GM12878 (cell line): ENCODE measurements at regions of chr1 and their contacts with region 1.

Region 1: GRCh38 chr1:116538544-116538943 is 32.3 kb downstream of the CD58 start:
- DNase-seq: no peak
- ATAC-seq: peak; percentile 89
- H3K4me3 ChIP-seq: no peak overlapping the region
- H3K27ac ChIP-seq: peak overlapping the region; percentile 66
- H3K4me1 ChIP-seq: peaks cover 51% of the 10 kb centered on the region
- H3K27me3 ChIP-seq: no peaks in the 10 kb centered on the region
- CTCF ChIP-seq: no peak
- EP300 ChIP-seq: peak in 1 of 2 experiments; percentile 34; a peak in 1 of 4 replicates
- POLR2A ChIP-seq: no peak
- RAD21 ChIP-seq: no peak

Region 2: GRCh38 chr1:116382321-116382720 is 156.2 kb before region 1 on chr1:
- CTCF ChIA-PET with region 1: no interaction called
- POLR2A ChIA-PET with region 1: no interaction called
- RAD21 ChIA-PET with region 1: no interaction called
- SMC1A ChIA-PET with region 1: no interaction called
- in situ Hi-C with region 1: no loop called
- intact Hi-C with region 1: no loop called
- DNase-seq: no peak
- ATAC-seq: no peak
- H3K4me3 ChIP-seq: no peak overlapping the region
- H3K27ac ChIP-seq: peak overlapping the region; percentile 1; the same call in 1 of the 2 replicates
- H3K4me1 ChIP-seq: peaks cover 36% of the 10 kb centered on the region
- H3K27me3 ChIP-seq: no peaks in the 10 kb centered on the region
- CTCF ChIP-seq: no peak
- EP300 ChIP-seq: no peak
- POLR2A ChIP-seq: no peak
- RAD21 ChIP-seq: no peak

Region 3: DNA sequence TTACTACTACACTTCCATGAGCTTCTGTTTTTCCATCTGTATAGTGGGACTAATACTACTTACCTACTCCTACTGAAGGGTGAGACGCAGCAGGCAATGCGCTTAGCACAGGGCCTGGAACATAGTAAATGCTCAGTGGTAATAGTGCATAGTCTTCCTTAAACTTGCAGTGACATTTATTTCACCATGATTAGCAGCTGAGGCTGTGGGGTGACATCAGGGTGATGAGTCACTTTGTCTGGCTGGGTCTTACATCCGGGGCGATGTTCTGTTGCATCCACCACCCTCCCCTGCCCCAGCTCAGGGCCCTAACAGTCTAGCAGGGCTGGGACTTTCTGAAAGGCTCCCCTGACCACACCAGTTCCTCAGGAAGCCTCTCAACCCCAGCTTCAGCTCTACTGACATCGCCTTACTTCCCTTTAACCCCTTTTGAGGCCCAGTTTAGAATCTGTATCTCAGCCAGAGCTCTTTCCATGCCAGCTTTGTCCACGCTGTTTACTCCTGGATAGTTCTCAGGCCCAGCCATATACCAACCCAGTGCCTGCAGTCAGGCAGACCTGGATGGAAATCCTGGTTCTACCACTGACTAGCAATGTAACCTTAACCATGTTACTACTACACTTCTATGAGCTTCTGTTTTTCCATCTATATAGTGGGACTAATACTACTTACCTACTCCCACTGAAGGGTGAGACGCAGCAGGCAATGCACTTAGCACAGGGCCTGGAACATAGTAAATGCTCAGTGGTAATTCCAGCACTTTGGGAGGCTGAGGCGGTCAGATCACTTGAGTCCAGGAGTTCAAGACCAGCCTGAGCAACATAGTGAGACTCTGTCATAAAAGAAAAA is 34.0 kb before region 1 on chr1:
- CTCF ChIA-PET with region 1: interaction called, 7 read pairs
- POLR2A ChIA-PET with region 1: interaction called, 5 read pairs
- RAD21 ChIA-PET with region 1: interaction called, 9 read pairs
- SMC1A ChIA-PET with region 1: interaction called, 31 read pairs
- in situ Hi-C with region 1: no loop called
- intact Hi-C with region 1: loop called (anchors 1 kb)
- DNase-seq: peak; percentile 91
- ATAC-seq: peak; percentile 90
- H3K4me3 ChIP-seq: no peak overlapping the region
- H3K27ac ChIP-seq: peak overlapping the region; percentile 84
- H3K4me1 ChIP-seq: peaks cover 54% of the 10 kb centered on the region
- H3K27me3 ChIP-seq: no peaks in the 10 kb centered on the region
- CTCF ChIP-seq: no peak
- EP300 ChIP-seq: peak; percentile 43 to 69; a peak in 1 of 4 replicates
- POLR2A ChIP-seq: no peak
- RAD21 ChIP-seq: 0 out of 2 replicates have a peak, but pooled peaks have one; percentile 19

Region 4: DNA sequence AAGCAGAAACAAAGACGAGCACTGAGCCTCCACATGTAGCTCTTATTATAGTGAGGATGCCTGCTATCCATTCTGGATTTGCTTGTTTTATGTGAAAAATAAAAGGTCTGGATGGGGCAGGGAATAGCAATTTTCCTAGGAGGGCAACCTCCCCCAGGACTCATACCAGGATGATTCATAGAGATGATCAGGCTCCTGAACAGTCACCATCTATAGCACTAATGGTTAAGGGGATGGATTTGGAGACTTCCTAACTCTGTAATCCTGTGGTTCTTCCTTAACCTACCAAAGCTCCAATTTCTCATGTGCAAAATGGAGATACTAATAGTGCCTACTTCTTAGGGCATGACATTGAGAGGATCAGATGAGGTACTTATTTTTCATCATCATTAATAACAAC is 66.8 kb after region 1 on chr1:
- CTCF ChIA-PET with region 1: no interaction called
- POLR2A ChIA-PET with region 1: no interaction called
- RAD21 ChIA-PET with region 1: no interaction called
- SMC1A ChIA-PET with region 1: no interaction called
- in situ Hi-C with region 1: no loop called
- intact Hi-C with region 1: no loop called
- DNase-seq: no peak
- ATAC-seq: no peak
- H3K4me3 ChIP-seq: no peak overlapping the region
- H3K27ac ChIP-seq: no peak overlapping the region
- H3K4me1 ChIP-seq: no peaks in the 10 kb centered on the region
- H3K27me3 ChIP-seq: no peaks in the 10 kb centered on the region
- CTCF ChIP-seq: no peak
- EP300 ChIP-seq: no peak
- POLR2A ChIP-seq: no peak
- RAD21 ChIP-seq: no peak

Region 5: GRCh38 chr1:116666799-116667574 is 128.4 kb after region 1 on chr1:
- CTCF ChIA-PET with region 1: no interaction called
- POLR2A ChIA-PET with region 1: no interaction called
- RAD21 ChIA-PET with region 1: no interaction called
- SMC1A ChIA-PET with region 1: no interaction called
- in situ Hi-C with region 1: no loop called
- intact Hi-C with region 1: no loop called
- DNase-seq: no peak
- ATAC-seq: peak; percentile 38
- H3K4me3 ChIP-seq: peak overlapping the region; percentile 67
- H3K27ac ChIP-seq: no peak overlapping the region
- H3K4me1 ChIP-seq: no peaks in the 10 kb centered on the region
- H3K27me3 ChIP-seq: peaks cover 0 to 12% of the 10 kb centered on the region in 2 experiments; a peak in 2 of 4 replicates
- CTCF ChIP-seq: no peak
- EP300 ChIP-seq: no peak
- POLR2A ChIP-seq: no peak
- RAD21 ChIP-seq: no peak